Activated T-helper 1 cell treated with anti-CD3 and anti-CD28 coated beads, Interleukin-12 subunit alpha, Interleukin-12 subunit beta, Interleukin-2, Interleukin-4 antibody, amounts not matched to agents 30 ng/mL and 10 ng/mL and 1 ng/mL, durations not matched to agents 14 hours and 24 hours and 36 hours (primary cell): ENCODE measurements at regions of chr6 and their contacts with region 1.

Region 1: DNA sequence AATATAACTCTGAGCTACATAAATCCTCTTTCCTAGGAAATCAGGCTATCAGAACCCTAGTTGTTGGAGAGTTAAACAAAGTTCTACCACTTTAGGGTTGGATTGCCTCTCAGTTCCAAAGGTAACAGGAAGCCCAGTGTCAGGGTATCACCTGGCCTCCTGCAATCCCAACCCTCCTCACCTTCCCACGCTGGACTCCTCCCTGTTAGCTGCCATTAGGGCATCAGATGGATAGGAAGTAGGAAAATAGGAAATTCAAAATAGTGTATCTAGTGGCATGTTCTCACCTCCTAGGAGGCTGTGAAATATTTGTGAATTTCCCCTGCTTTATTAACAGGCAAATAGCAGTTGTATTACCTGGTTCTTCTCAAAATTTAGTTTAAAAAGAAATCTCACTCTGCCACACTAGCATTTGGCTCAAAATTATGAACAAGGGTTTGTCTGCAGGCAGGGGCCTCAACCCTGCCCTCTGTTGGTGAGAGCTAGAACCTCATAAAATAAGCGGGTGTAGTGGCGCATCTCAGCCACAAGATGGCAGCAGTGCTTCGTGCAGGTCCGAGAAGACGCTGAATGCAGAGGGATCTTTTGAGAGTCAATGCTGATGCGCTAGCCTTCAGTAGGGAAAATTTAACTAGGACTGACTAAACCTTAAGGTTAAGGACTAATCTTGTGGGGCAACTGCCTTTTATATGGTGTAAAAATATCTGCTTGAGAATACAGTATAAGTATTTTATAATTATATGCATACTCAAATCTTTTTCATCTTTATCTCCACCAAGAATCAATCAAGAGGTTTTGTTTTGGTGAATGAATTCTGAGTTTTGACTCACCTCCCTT is 209.8 kb upstream of the KCNQ5 start:
- DNase-seq: peak; percentile 70
- H3K4me3 Mint-ChIP-seq: no peak overlapping the region
- H3K27ac Mint-ChIP-seq: no peak overlapping the region
- H3K4me1 Mint-ChIP-seq: no peaks in the 10 kb centered on the region
- H3K27me3 Mint-ChIP-seq: peaks cover 13% of the 10 kb centered on the region

Region 2: DNA sequence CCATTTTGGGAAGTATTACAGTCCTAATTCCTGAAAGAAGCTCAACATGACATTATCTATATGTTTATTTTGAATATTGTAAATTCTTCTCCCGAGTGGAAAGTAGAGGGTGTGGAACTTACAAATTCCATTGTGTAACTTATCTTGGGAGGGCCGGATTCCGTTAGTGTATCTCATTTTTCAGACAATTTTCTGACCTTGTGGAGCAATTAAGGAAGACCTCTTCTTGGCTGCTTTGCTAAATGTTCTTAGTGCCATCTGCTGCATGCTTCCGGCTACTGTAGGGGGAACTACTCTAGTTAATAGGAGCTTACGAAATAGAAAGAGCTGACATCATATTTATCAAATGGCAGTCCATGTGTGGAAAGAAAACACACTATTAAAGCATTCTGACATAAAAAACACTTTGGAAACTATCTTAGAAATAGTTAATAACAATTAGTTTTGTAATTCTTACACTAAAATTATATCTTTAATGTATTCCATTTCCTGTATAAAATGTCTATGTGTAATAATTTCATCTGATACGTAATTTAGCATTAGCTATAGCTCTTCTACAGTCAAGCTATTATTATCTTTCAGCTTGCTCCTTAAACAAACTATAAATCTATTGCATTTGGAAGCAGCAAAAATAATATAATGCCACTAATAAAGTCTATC is 168.3 kb after region 1 on chr6:
- intact Hi-C with region 1: loop called (anchors 5 kb)
- DNase-seq: no peak
- H3K4me3 Mint-ChIP-seq: no peak overlapping the region
- H3K27ac Mint-ChIP-seq: no peak overlapping the region
- H3K4me1 Mint-ChIP-seq: no peaks in the 10 kb centered on the region
- H3K27me3 Mint-ChIP-seq: peaks cover 2% of the 10 kb centered on the region

Region 3: DNA sequence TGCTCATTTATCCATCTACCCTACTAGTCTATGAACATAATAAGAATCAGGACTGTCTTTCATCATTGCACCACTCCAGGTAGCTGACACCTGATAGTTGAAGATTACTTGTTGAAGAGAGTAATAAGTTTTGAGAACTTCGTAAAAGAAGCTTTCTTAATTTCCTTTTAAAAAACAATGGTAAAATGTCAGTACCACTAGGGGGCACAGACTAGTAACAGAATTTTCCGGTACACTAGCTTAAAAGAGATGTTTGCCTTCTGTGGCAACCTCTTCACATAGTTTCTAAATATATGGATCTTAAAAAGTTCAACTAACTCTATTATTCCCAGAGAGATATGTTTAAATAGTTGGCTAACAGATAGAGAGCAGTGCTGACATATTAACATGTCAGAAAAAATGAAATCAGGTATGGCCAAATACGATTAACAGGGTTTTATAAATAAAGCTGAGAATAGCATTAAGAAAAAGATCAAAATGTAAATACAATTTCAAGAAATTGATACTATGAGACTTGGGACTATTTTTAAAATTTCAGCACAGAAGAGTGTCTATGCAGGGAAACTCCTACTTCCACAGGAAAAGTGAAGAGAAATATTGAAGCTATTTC is 204.4 kb after region 1 on chr6:
- intact Hi-C with region 1: loop called (anchors 1 kb)
- DNase-seq: no peak
- H3K4me3 Mint-ChIP-seq: no peak overlapping the region
- H3K27ac Mint-ChIP-seq: no peak overlapping the region
- H3K4me1 Mint-ChIP-seq: peaks cover 33% of the 10 kb centered on the region
- H3K27me3 Mint-ChIP-seq: peaks cover 5% of the 10 kb centered on the region

Region 4: GRCh38 chr6:73129653-73130443 is 717.8 kb after region 1 on chr6:
- intact Hi-C with region 1: loop called (anchors 1 kb)
- DNase-seq: peak; percentile 71
- H3K4me3 Mint-ChIP-seq: no peak overlapping the region
- H3K27ac Mint-ChIP-seq: no peak overlapping the region
- H3K4me1 Mint-ChIP-seq: peaks cover 5% of the 10 kb centered on the region
- H3K27me3 Mint-ChIP-seq: peaks cover 13% of the 10 kb centered on the region

Region 5: DNA sequence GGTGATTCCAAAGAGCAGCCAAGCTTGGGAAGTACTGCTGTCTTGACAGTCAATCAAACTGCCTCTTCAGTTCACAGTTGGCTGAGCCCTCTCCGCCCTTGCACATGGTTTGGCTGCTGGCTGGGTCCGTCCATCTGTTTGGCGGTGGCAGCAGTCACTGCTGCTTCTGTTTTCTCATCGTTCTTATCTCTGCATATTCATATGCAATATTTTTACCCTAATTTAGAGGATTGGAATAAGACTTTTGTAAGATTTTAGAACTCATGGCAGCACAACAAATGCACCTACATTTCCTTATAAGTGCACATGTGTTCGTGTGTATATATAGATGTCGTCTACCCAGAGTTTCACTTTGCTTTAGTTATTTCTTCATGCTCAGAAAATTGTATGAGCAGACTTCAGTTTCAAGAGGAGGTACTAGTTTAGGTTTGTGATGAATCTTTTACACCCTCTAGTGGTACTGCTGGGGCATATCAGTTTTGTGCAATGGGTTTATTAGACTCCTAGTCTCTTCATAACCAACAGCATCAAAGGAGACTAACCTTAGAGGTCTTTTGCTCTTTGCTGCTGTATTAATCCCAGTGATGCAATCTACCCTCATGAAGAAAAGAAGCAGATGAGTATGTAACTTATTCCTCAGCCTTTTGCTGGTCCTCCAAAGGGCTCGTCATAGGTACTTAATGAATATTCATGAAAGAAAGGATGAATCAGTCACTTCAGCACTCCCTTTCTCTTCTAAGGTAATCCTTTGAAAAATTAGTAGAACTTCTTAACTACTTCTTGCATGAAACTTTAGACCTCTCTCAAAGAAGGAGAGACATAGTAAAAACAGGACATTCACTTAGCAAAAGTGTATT is 768.9 kb after region 1 on chr6:
- intact Hi-C with region 1: loop called (anchors 1 kb)
- DNase-seq: no peak
- H3K4me3 Mint-ChIP-seq: no peak overlapping the region
- H3K27ac Mint-ChIP-seq: no peak overlapping the region
- H3K4me1 Mint-ChIP-seq: peaks cover 4% of the 10 kb centered on the region
- H3K27me3 Mint-ChIP-seq: no peaks in the 10 kb centered on the region

Region 6: DNA sequence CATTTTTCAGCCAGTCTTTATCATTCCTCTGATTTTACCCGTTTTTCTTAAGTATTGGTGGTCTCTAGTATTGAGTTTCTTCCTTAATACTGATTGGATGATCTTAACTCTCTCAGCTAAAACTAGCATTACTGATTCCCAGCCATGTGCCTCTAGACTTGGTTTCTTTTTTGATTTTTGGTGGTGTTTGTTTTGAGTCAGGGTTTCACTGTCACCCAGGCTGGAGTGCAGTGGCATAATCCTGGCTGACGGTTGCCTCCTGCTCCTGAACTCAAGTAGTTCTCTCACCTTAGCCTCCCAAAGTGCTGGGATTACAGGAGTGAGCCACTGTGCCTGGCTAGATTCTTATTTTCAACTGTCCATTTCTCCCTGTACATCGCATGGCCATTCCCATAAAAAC is 917.1 kb after region 1 on chr6:
- intact Hi-C with region 1: loop called (anchors 1 kb)
- DNase-seq: no peak
- H3K4me3 Mint-ChIP-seq: no peak overlapping the region
- H3K27ac Mint-ChIP-seq: no peak overlapping the region
- H3K4me1 Mint-ChIP-seq: peaks cover 7% of the 10 kb centered on the region
- H3K27me3 Mint-ChIP-seq: peaks cover 24% of the 10 kb centered on the region

Region 7: GRCh38 chr6:73388800-73389512 is 976.9 kb after region 1 on chr6:
- intact Hi-C with region 1: loop called (anchors 1 kb)
- DNase-seq: peak; percentile 51
- H3K4me3 Mint-ChIP-seq: peak overlapping the region; percentile 75
- H3K27ac Mint-ChIP-seq: peak overlapping the region; percentile 74
- H3K4me1 Mint-ChIP-seq: peaks cover 19% of the 10 kb centered on the region
- H3K27me3 Mint-ChIP-seq: peaks cover 3% of the 10 kb centered on the region